IMR-90 (cell line): ENCODE measurements at regions of chr5 and their contacts with region 1.

Region 1: DNA sequence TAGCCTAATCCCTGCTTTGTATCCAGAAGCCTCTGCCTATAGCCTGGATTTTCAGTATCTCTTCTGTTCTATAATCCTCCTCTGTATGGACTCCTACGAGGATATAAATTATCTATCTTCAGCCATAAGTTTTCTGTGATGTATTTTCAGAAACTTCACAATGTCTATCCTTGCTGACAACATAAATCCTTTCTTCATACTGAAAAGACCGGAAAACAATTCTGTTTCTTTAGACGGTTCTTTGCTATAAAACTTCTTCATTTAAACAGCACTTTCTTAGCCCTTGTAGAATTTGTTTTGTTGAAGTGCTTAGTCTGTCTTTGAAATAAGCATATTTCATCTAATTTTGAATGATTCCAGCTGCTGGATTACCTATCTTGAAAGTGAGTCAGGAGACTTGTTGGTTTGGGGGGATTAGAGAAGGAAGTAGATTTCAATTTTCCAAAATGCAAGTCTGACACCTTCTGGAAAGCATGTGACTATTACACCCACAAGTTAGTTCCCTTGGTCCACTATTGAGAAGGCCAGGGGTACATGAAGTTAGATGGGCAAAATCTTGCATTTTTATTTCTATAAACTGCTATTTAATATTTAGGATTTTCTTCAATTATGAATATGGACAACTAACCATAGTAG is 96.3 kb upstream of the RANBP3L start:
- DNase-seq: peak; percentile 17
- ATAC-seq: peak; percentile 40; the same call in 1 of the 2 replicates
- H3K4me3 ChIP-seq: no peak overlapping the region
- H3K27ac ChIP-seq: no peak overlapping the region
- H3K4me1 ChIP-seq: no peaks in the 10 kb centered on the region
- H3K27me3 ChIP-seq: peaks cover 4% of the 10 kb centered on the region
- CTCF ChIP-seq: 0 out of 2 replicates have a peak, but pooled peaks have one; percentile 17
- POLR2A ChIP-seq: no peak
- RAD21 ChIP-seq: no peak

Region 2: GRCh38 chr5:35683466-35683865 is 714.6 kb before region 1 on chr5:
- CTCF ChIA-PET with region 1: no interaction called
- POLR2A ChIA-PET with region 1: no interaction called
- dilution Hi-C with region 1: no loop called
- in situ Hi-C with region 1: no loop called
- intact Hi-C with region 1: no loop called
- DNase-seq: no peak
- ATAC-seq: no peak
- H3K4me3 ChIP-seq: no peak overlapping the region
- H3K27ac ChIP-seq: no peak overlapping the region
- H3K4me1 ChIP-seq: no peaks in the 10 kb centered on the region
- H3K27me3 ChIP-seq: no peaks in the 10 kb centered on the region
- CTCF ChIP-seq: no peak
- POLR2A ChIP-seq: no peak
- RAD21 ChIP-seq: no peak

Region 3: DNA sequence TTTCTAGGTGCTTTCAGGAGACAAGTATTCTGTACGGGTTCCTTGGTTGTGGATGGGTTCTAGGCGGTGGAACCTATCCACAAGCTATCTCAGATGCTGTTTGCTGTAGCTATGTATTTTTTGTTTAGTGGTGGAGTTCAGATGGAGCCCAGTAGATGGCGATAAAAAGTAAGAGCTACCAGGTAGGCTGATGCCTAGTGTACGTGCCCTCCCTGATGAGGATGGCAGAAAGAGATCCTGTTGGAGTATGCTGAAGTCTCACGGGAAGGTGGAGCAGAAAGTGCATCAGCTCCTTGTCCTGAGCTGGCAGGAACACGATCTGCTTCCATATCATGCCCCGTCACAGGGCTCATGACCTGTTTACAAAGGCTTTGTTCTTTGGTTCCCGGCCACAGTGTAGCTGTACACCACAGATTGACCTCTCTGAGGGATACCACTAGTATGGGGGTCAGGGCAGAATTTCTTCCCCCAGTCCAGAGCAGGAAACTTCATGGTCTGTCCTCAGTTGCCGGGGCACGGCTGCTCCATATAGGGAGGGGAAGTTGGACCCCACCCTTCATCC is 318.7 kb before region 1 on chr5:
- CTCF ChIA-PET with region 1: no interaction called
- POLR2A ChIA-PET with region 1: no interaction called
- dilution Hi-C with region 1: no loop called
- in situ Hi-C with region 1: no loop called
- intact Hi-C with region 1: loop called (anchors 2 kb)
- DNase-seq: peak; percentile 44
- ATAC-seq: peak; percentile 97
- H3K4me3 ChIP-seq: no peak overlapping the region
- H3K27ac ChIP-seq: no peak overlapping the region
- H3K4me1 ChIP-seq: no peaks in the 10 kb centered on the region
- H3K27me3 ChIP-seq: peaks cover 5% of the 10 kb centered on the region
- CTCF ChIP-seq: peak; percentile 60
- POLR2A ChIP-seq: no peak
- RAD21 ChIP-seq: peak; percentile 61

Region 4: DNA sequence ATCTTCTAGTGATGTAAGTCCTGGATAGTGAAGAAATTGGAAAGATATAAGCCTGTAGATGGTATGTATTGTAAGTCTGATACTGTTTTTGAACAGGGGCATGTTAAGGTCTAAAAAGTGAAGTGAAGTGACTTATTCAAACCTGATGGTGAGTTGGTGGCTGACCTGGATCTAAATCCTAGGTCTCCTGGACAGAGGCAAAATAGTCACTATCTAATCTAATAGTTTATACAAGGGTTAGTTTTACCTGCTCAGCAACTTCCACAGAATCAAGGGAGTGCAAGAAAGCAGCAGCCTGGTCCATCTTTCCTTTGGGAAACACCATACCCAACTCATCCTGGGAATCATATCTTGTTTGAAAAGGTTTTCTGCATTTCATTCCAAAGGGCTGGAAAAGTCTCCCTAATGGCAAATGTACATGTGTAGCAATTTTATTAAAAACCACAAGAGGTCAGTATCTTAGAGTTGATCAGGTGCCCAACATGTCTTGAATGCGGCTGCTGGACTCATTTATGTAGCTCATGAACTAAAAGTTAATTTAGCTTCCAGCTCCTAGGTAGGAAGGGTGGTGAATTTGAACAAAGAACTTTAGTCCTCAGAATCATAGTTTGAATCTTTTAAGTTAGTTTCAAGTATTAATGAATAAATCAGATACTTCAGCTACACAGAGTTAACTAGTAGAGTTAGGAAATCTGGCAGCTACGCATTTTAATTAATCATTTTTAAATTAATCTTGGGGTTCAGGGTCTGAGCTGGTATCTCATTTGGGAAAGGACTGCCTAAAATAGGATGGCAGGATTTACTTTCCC is 220.1 kb before region 1 on chr5:
- CTCF ChIA-PET with region 1: no interaction called
- POLR2A ChIA-PET with region 1: no interaction called
- dilution Hi-C with region 1: no loop called
- in situ Hi-C with region 1: no loop called
- intact Hi-C with region 1: loop called (anchors 10 kb)
- DNase-seq: peak; percentile 65
- ATAC-seq: peak; percentile 77
- H3K4me3 ChIP-seq: no peak overlapping the region
- H3K27ac ChIP-seq: no peak overlapping the region
- H3K4me1 ChIP-seq: 0 out of 2 replicates have a peak, but pooled peaks cover 5% of the 10 kb centered on the region
- H3K27me3 ChIP-seq: no peaks in the 10 kb centered on the region
- CTCF ChIP-seq: peak; percentile 63
- POLR2A ChIP-seq: no peak
- RAD21 ChIP-seq: peak; percentile 63

Region 5: GRCh38 chr5:36269479-36270219 is 128.4 kb before region 1 on chr5:
- CTCF ChIA-PET with region 1: no interaction called
- POLR2A ChIA-PET with region 1: no interaction called
- dilution Hi-C with region 1: no loop called
- in situ Hi-C with region 1: no loop called
- intact Hi-C with region 1: loop called (anchors 5 kb)
- DNase-seq: no peak
- ATAC-seq: no peak
- H3K4me3 ChIP-seq: no peak overlapping the region
- H3K27ac ChIP-seq: no peak overlapping the region
- H3K4me1 ChIP-seq: no peaks in the 10 kb centered on the region
- H3K27me3 ChIP-seq: peaks cover 4% of the 10 kb centered on the region
- CTCF ChIP-seq: no peak
- POLR2A ChIP-seq: no peak
- RAD21 ChIP-seq: no peak

Region 6: DNA sequence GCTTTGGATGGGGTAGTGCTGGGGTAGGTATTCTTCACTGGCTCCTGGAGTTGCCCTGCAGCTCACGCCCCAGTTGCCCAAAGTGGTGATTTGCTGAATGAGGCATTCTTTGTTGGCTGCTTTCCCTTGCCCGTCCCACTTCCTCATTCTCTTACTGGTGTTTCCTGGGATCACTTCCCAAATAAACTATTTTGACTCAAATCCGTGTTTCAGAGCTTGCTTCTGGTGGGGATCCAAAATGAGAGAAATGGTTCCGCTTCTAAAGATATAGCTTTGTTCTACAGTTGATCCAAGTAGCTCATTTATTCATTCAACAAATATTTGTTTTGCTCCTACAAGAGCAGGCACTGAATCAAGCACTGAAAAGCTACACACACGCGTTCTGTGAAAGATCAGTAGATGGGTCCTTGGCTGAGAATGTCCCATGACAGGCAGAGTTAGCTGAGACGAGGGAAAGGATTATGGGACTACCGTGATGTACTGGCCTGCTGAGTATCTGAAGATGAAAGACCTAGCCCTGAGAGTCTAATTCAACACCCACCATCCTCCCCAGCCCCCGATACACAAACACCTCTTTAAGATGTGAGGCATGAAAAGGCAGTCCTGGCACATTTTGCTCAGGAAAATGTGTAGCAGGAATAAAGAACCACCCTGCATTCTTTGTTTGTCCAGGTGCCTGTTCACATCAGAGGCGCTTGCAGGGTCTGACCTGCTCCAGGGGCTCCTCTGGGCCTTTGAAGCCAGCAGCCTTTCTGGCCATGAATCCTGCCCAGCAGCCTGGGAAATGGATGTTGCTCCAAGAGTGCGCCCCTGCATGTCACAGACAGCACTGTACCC is 46.8 kb after region 1 on chr5:
- CTCF ChIA-PET with region 1: no interaction called
- POLR2A ChIA-PET with region 1: no interaction called
- dilution Hi-C with region 1: no loop called
- in situ Hi-C with region 1: no loop called
- intact Hi-C with region 1: no loop called
- DNase-seq: no peak
- ATAC-seq: no peak
- H3K4me3 ChIP-seq: no peak overlapping the region
- H3K27ac ChIP-seq: no peak overlapping the region
- H3K4me1 ChIP-seq: no peaks in the 10 kb centered on the region
- H3K27me3 ChIP-seq: no peaks in the 10 kb centered on the region; the same call in 1 of the 2 replicates
- CTCF ChIP-seq: no peak
- POLR2A ChIP-seq: no peak
- RAD21 ChIP-seq: no peak

Region 7: DNA sequence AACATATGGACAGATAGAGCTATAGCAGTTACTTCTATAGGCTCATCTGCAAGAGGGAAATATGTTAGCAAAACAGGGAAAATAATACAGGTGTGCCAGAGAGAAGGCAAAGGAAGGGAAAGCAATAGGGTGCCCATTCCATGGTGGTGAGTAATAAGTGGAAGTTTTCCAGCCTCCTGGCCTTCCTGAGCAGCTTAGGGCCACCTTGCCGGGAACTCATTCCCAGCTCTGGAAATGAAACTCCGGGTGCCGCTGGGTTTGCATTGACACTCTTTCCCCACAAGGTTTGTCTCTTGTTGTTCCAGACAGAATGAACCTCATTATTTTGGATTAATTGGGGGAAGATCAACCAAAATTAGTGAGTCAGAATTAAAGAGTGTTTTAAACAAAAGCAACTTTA is 266.8 kb after region 1 on chr5:
- CTCF ChIA-PET with region 1: no interaction called
- POLR2A ChIA-PET with region 1: no interaction called
- dilution Hi-C with region 1: no loop called
- in situ Hi-C with region 1: no loop called
- intact Hi-C with region 1: no loop called
- DNase-seq: no peak
- ATAC-seq: no peak
- H3K4me3 ChIP-seq: no peak overlapping the region
- H3K27ac ChIP-seq: no peak overlapping the region
- H3K4me1 ChIP-seq: peaks cover 2% of the 10 kb centered on the region; the same call in 1 of the 2 replicates
- H3K27me3 ChIP-seq: no peaks in the 10 kb centered on the region
- CTCF ChIP-seq: no peak
- POLR2A ChIP-seq: no peak
- RAD21 ChIP-seq: no peak

Region 8: GRCh38 chr5:37831821-37832534 is 1434.0 kb after region 1 on chr5:
- CTCF ChIA-PET with region 1: no interaction called
- POLR2A ChIA-PET with region 1: no interaction called
- dilution Hi-C with region 1: no loop called
- in situ Hi-C with region 1: no loop called
- intact Hi-C with region 1: no loop called
- DNase-seq: peak; percentile 84
- ATAC-seq: peak; percentile 81
- H3K4me3 ChIP-seq: no peak overlapping the region
- H3K27ac ChIP-seq: no peak overlapping the region
- H3K4me1 ChIP-seq: peaks cover 6% of the 10 kb centered on the region; the same call in 1 of the 2 replicates
- H3K27me3 ChIP-seq: peaks cover 4% of the 10 kb centered on the region; the same call in 1 of the 2 replicates
- CTCF ChIP-seq: peak; percentile 16; the same call in 1 of the 2 replicates
- POLR2A ChIP-seq: no peak
- RAD21 ChIP-seq: peak; percentile 27